ENCODE measurements at regions of chr2 and their contacts with region 1.

Region 1: GRCh38 chr2:10911261-10912075 is at the start of gene KCNF1:
- DNase-seq: peak; percentile 51
- ATAC-seq: peak; percentile 69
- H3K4me3 ChIP-seq: peak within 1 kb of the TSS; percentile 50; the same call in 1 of the 2 replicates
- H3K27ac ChIP-seq: no peak within 1 kb of the TSS
- H3K4me1 ChIP-seq: no peaks in the 10 kb centered on the region
- H3K27me3 ChIP-seq: no peaks in the 10 kb centered on the region
- CTCF ChIP-seq: peak; percentile 45
- total RNA-seq, gene KCNF1: 1.3 and 1.8 TPM in 2 replicates

Region 2: GRCh38 chr2:10774394-10774793 is 137.1 kb before region 1 on chr2:
- CTCF ChIA-PET with region 1: no interaction called
- POLR2A ChIA-PET with region 1: no interaction called
- intact Hi-C with region 1: no loop called
- DNase-seq: no peak
- ATAC-seq: no peak
- H3K4me3 ChIP-seq: no peak overlapping the region
- H3K27ac ChIP-seq: no peak overlapping the region
- H3K4me1 ChIP-seq: no peaks in the 10 kb centered on the region
- H3K27me3 ChIP-seq: no peaks in the 10 kb centered on the region
- CTCF ChIP-seq: no peak

Region 3: DNA sequence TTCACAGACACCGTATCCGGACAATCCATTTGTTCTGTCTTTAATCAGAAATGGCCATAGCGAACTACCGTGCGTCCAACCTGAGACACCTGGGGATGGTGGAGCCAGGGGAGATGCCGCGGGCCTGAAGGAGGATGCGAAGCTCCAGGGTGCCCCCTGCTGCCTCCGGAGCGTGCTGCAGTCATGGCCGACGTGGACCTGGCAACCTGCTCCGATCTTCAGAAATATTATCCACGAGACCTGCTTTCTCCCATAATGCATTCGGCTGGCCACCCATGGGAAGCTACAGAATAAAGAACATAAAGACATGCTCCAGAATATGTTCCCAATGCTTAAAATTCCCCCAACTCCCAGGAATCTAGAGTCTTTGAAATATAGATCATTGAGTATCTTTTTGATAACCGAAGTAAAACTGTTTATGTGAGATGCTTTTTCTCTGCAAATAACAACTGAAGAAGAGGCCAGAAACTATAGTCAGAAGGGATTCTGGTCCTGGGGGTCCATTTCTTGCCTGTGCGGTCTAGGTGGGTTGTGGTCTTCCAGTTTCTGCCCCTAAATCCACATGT is 213.1 kb after region 1 on chr2:
- CTCF ChIA-PET with region 1: no interaction called
- POLR2A ChIA-PET with region 1: no interaction called
- intact Hi-C with region 1: loop called (anchors 2 kb)
- DNase-seq: peak; percentile 85
- ATAC-seq: peak; percentile 81
- H3K4me3 ChIP-seq: no peak overlapping the region
- H3K27ac ChIP-seq: no peak overlapping the region
- H3K4me1 ChIP-seq: peaks cover 12% of the 10 kb centered on the region
- H3K27me3 ChIP-seq: no peaks in the 10 kb centered on the region
- CTCF ChIP-seq: peak; percentile 95